A673 (cell line): ENCODE measurements at regions of chr1 and their contacts with region 1.

Region 1: DNA sequence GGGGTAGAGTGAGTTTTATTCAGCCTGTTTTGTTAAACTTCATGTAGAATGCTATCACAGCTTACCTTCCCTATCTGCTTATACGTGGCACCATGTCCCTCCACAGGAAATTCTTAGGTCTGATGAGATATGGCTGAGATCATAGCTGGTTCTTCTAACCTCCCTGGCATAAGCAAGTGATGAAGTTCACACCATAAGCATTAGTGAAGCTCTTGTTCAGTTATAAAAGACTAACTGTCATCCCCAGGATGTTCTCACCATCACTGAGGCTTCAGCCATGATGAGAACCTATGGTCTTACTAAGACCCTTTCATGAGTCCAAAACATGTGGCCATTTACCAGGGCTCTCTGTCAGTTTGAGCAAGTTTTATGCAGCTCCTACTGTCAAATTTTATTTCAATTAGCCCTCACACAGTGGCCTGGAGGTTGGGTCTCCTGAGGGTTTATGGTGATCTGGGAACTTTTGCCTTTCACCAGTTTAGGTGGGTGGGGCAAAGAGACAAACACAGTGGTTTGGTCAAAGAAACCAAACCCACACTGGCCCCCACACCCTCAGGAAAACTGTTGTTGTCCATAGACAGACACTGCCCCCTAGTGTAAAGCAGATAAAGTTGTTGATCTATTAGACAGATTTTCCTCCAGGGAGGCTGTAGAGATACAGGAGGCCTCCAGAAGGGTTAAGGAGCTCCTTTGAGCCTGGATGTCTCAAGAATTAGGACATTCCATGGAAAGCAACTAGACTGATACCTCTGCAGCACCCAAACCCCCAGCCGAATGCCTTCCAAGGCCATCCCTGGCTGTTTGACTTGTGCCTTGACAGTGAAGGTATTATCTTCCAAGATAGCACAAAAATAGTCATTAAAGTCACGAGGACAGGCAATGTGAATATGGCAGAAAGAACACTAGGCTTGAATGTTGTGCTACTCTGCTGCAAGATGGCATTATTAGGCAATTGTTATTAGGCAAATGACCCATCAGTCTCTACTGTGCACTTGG is 5.0 kb downstream of the SLC22A15 start:
- DNase-seq: peak; percentile 70
- H3K4me3 ChIP-seq: no peak overlapping the region
- H3K27ac ChIP-seq: no peak overlapping the region
- H3K4me1 ChIP-seq: no peaks in the 10 kb centered on the region
- H3K27me3 ChIP-seq: no peaks in the 10 kb centered on the region
- CTCF ChIP-seq: peak; percentile 82

Region 2: GRCh38 chr1:115706587-115707425 is 274.5 kb before region 1 on chr1:
- CTCF ChIA-PET with region 1: no interaction called
- POLR2A ChIA-PET with region 1: no interaction called
- intact Hi-C with region 1: no loop called
- DNase-seq: peak; percentile 84
- H3K4me3 ChIP-seq: no peak overlapping the region
- H3K27ac ChIP-seq: no peak overlapping the region
- H3K4me1 ChIP-seq: peaks cover 23% of the 10 kb centered on the region
- H3K27me3 ChIP-seq: no peaks in the 10 kb centered on the region
- CTCF ChIP-seq: peak; percentile 89

Region 3: GRCh38 chr1:115717541-115717940 is 263.8 kb before region 1 on chr1:
- CTCF ChIA-PET with region 1: no interaction called
- POLR2A ChIA-PET with region 1: no interaction called
- intact Hi-C with region 1: loop called (anchors 5 kb)
- DNase-seq: peak; percentile 23
- H3K4me3 ChIP-seq: no peak overlapping the region
- H3K27ac ChIP-seq: no peak overlapping the region
- H3K4me1 ChIP-seq: no peaks in the 10 kb centered on the region
- H3K27me3 ChIP-seq: no peaks in the 10 kb centered on the region
- CTCF ChIP-seq: peak; percentile 66

Region 4: GRCh38 chr1:116122955-116123757 is 141.9 kb after region 1 on chr1:
- CTCF ChIA-PET with region 1: no interaction called
- POLR2A ChIA-PET with region 1: no interaction called
- intact Hi-C with region 1: no loop called
- DNase-seq: no peak
- H3K4me3 ChIP-seq: no peak overlapping the region
- H3K27ac ChIP-seq: no peak overlapping the region
- H3K4me1 ChIP-seq: no peaks in the 10 kb centered on the region
- H3K27me3 ChIP-seq: no peaks in the 10 kb centered on the region
- CTCF ChIP-seq: no peak